Activated CD4-positive, alpha-beta T cell treated with anti-CD3 and anti-CD28 coated beads, Interleukin-2, amount 10 ng/mL, durations not matched to agents 24 days and 14 days (primary cell): ENCODE measurements at regions of chr17 and their contacts with region 1.

Region 1: GRCh38 chr17:29533976-29534375 is 32.9 kb downstream of the ABHD15 start:
- DNase-seq: no peak
- H3K4me3 Mint-ChIP-seq: no peak overlapping the region
- H3K27ac Mint-ChIP-seq: no peak overlapping the region
- H3K4me1 Mint-ChIP-seq: no peaks in the 10 kb centered on the region
- H3K27me3 Mint-ChIP-seq: no peaks in the 10 kb centered on the region

Region 2: DNA sequence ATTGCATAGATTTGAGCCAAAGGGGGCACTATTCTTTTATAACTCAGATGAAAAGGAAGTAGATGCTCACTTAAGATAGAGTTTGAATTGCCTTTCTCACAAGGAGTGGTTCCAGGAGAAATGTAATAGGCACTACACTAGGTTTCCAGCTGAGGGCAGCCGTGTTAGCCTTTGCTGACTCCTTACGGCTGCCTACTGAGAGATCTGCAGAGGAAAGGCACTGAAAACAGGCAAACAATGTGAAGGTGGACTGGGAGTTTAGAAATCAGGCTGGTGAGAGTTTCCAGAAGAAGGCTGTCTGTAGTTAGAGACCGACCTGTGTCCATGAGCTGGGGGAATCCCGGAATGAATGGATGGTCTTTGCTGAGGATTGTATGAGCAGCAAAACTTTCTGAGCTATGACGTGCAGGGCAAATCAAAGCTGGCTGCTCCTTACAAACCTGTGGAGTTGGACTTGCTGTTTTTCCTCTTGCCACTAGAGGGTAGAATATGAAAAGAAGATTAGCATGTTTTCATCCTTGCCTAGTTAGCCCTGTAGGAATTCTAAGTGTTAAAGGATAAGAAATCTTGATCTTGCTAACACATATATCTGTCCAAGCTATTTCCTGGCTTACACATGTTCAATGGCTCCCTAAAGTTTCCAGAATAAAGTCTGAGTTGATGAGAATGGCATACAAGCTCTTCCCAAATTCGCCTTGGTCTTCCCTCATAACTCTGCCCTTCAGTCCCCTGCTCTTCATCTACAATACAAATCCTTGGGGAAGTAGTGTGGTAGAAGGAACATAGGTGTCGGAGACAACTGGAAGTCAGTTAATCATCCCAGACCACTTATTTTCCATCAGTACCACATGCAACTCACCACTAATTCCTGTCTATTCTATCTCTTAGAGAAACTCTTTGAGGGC is 163.9 kb before region 1 on chr17:
- intact Hi-C with region 1: loop called (anchors 1 kb)
- DNase-seq: peak; percentile 82
- H3K4me3 Mint-ChIP-seq: no peak overlapping the region
- H3K27ac Mint-ChIP-seq: no peak overlapping the region
- H3K4me1 Mint-ChIP-seq: no peaks in the 10 kb centered on the region
- H3K27me3 Mint-ChIP-seq: peaks cover under 1% of the 10 kb centered on the region

Region 3: DNA sequence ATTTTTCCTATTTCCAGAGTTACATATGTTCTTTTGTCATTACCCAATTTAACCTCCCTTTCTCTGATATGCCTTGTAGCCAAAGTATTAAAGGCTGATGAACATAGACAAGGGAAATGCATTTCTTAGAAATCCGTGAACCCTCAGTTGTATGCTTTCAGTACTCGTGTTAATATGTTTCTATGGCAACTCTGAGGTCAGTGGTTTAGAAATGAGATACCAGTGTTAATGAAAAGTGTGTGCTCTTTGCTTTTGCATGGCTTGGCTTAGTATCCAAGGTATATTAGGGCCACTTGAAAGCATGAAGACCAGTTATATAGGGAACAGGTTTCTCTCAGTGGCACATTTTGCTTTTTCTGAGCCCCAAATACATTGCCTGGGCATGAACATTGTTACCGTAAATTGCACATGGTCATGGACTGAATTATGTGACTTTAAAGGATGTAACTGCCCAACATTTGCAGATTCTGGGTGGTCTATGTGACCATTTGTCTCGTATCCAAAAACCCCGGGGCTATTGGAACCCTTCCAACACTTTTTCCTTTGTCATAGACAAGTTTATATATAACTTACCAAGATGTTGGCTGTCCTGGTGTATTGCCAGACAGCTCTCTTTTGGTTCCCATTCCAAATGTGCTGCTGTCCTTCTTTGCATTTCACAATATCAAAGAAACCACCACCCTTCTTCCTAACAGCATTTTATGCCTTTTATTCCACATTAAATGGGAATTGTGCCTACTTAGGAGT is 15.4 kb after region 1 on chr17:
- intact Hi-C with region 1: no loop called
- DNase-seq: no peak
- H3K4me3 Mint-ChIP-seq: no peak overlapping the region
- H3K27ac Mint-ChIP-seq: no peak overlapping the region
- H3K4me1 Mint-ChIP-seq: no peaks in the 10 kb centered on the region
- H3K27me3 Mint-ChIP-seq: no peaks in the 10 kb centered on the region